ENCODE measurements at regions of chr3 and their contacts with region 1.

Region 1: DNA sequence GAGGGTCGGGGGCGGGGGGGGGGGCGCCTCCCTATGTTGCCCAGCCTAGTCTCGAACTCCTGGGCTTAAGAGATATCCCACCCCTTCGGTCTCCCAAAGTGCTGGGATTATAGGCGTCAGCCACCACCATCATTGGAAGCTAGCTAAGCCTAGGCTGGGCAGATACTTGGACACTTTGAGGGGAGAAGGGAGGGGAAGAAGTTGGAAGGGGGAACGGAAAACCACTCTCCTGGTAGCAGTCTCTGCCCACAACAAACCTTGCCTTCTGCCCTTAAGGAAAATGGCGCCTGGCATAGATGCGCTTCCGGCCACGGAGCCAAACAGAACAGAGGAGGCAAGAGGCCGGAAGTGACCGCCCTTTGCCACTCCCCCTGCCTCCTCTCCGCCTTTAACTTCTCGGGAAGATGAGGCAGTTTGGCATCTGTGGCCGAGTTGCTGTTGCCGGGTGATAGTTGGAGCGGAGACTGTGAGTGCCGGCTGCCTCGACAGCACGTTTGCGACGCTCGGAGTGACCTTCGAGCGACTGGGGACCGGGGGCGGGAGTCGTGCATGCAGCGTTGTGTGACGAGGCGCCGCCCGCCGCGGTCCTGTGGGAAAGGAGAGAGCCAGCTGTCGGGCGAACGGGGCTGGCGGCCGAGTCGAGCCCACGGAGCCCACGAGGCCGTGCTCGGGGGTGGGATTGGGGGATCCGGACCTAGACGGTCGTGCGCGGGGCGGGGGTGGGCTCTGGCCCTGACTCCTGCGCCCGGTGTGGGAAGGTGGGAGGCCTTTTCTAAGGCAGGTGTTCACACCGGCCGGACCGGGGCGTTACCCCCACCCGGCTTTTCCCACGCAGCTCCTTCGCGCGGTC is at the start of gene MFN1:
- DNase-seq: peak; percentile 80
- ATAC-seq: peak; percentile 88
- H3K4me3 Mint-ChIP-seq: peak within 1 kb of the TSS; percentile 98
- H3K27ac Mint-ChIP-seq: peak within 1 kb of the TSS; percentile 95
- H3K4me1 Mint-ChIP-seq: peaks cover 35% of the 10 kb centered on the region
- H3K27me3 Mint-ChIP-seq: no peaks in the 10 kb centered on the region
- CTCF ChIP-seq: no peak
- total RNA-seq, gene MFN1: 64.9 and 65.3 TPM in 2 replicates

Region 2: GRCh38 chr3:178392511-178392926 is 955.1 kb before region 1 on chr3:
- CTCF ChIA-PET with region 1: no interaction called
- POLR2A ChIA-PET with region 1: no interaction called
- intact Hi-C with region 1: no loop called
- DNase-seq: no peak
- ATAC-seq: no peak
- H3K4me3 Mint-ChIP-seq: no peak overlapping the region
- H3K27ac Mint-ChIP-seq: no peak overlapping the region
- H3K4me1 Mint-ChIP-seq: no peaks in the 10 kb centered on the region
- H3K27me3 Mint-ChIP-seq: no peaks in the 10 kb centered on the region
- CTCF ChIP-seq: no peak

Region 3: GRCh38 chr3:179071550-179072397 is 275.8 kb before region 1 on chr3 and contains the start of gene ZMAT3:
- CTCF ChIA-PET with region 1: no interaction called
- POLR2A ChIA-PET with region 1: interaction called, 4 read pairs
- intact Hi-C with region 1: loop called (anchors 1 kb)
- DNase-seq: peak; percentile 82
- ATAC-seq: peak; percentile 74
- H3K4me3 Mint-ChIP-seq: peak within 1 kb of the TSS; percentile 96
- H3K27ac Mint-ChIP-seq: peak within 1 kb of the TSS; percentile 91
- H3K4me1 Mint-ChIP-seq: peaks cover 60% of the 10 kb centered on the region
- H3K27me3 Mint-ChIP-seq: no peaks in the 10 kb centered on the region
- CTCF ChIP-seq: no peak
- total RNA-seq, gene ZMAT3: 29.8 and 32.0 TPM in 2 replicates

Region 4: DNA sequence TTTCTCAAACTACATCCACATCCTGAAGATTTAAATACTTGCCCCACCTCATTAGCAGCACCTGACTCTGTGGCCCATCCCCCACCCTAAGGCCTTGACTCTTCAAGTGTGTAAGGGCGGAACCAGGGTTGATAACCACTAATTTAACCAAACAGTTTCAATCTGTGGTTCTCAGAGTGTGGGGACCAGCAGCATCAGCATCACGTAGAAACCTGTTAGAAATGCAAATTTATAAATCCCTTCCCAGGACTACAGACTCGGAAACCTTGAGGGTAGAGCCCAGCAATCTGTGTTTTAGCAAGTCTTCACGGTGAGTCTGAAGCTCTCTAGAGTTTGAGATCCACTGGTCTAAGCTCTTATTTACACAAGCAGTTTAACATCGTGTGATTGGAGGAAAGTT is 91.3 kb after region 1 on chr3:
- CTCF ChIA-PET with region 1: no interaction called
- POLR2A ChIA-PET with region 1: no interaction called
- intact Hi-C with region 1: loop called (anchors 1 kb)
- DNase-seq: peak; percentile 41
- ATAC-seq: peak; percentile 96
- H3K4me3 Mint-ChIP-seq: peak overlapping the region; percentile 71
- H3K27ac Mint-ChIP-seq: peak overlapping the region; percentile 92
- H3K4me1 Mint-ChIP-seq: peaks cover 51% of the 10 kb centered on the region
- H3K27me3 Mint-ChIP-seq: no peaks in the 10 kb centered on the region
- CTCF ChIP-seq: no peak

Region 5: DNA sequence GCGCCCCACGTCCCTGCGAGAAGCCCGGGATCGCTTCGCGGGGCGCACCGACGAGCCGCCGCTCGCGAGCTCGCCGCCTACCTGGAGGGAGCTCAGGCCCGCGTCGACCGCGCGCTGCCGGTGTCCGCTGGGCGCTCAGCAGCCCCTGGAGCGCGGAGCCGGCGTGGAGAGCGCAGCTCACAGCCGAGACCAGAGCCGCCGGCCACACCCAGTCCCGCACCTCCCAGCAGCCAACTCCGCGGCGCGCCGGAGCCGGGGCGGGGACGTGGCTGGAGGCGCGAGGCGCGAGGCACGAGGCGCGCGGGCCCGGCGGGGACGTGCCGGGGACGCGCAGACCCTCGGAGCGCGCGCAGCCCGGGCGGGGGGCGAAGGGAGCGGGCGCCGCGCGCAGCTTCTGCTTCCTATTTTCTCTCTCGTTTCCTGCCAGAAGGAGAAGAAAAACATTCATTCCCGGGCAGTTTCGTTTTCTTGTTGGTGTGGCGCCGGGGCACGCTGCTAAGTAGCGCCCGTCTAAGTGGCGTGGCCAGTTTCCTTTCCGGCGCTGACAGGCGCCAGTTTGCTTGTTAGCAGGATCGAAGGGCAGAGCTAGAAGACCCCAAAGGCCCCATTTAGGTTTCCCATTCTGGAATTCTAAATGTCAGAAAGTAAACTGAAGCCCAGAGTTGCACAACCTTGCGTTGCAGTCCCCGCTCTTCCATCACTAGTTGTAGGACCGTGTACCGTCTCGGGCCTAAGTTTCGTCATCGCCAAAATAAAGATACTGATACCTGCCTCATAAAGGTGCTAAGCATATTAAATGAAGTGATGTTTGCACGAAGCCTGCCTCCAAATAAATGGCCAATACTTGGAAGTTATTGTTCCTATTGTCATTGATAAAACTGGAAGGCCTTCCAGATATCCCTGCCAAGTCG is 104.0 kb after region 1 on chr3 and contains the start of gene GNB4:
- CTCF ChIA-PET with region 1: no interaction called
- POLR2A ChIA-PET with region 1: no interaction called
- intact Hi-C with region 1: loop called (anchors 5 kb)
- DNase-seq: peak; percentile 74
- ATAC-seq: peak; percentile 88
- H3K4me3 Mint-ChIP-seq: peak within 1 kb of the TSS; percentile 92
- H3K27ac Mint-ChIP-seq: peak within 1 kb of the TSS; percentile 93
- H3K4me1 Mint-ChIP-seq: peaks cover 35% of the 10 kb centered on the region
- H3K27me3 Mint-ChIP-seq: no peaks in the 10 kb centered on the region
- CTCF ChIP-seq: no peak
- total RNA-seq, gene GNB4: 18.0 and 22.7 TPM in 2 replicates

Region 6: DNA sequence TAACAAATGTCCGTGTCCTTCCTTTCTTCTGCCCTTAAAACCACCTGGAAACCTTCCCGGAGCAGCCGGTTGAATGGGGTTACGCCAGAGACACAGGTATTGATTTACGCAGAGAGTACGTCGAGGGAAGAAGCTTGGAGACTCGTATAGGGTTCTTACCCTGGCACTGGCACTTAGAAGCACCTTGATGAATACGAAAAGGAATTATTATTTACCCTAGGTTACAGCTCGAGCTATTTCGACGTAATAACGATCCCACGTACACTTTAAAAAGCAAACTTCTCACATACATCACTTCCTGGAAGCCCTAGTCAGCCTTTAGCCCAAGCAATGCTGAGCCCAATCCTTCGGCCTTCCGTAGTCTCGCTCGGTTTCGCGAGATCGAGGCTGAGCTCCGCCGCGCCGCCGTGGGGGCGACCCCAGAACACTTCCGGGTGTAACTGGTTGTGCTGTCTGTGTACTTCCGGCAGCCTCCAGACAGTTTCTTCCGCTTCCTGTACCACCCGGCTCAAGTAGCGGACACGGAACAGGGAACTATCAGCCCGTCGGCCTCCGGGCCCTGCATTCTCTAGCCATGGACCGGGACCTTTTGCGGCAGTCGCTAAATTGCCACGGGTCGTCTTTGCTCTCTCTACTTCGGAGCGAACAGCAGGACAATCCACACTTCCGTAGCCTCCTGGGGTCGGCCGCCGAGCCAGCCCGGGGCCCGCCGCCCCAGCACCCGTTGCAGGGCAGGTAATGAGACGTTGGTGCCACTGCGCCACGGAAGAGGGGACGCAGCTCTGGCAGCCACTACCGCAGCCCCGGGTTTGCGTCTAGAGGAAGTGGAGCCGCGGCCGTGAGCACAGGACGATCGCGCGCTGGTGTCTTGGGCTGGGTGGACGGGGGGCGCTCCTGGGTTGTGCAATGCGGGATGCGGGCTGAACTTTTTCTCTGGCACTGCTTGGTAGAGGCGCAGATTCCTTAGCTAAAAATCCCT is 1254.4 kb after region 1 on chr3 and contains the start of gene TTC14:
- CTCF ChIA-PET with region 1: no interaction called
- POLR2A ChIA-PET with region 1: no interaction called
- intact Hi-C with region 1: loop called (anchors 5 kb)
- DNase-seq: peak; percentile 81
- ATAC-seq: peak; percentile 91
- H3K4me3 Mint-ChIP-seq: peak within 1 kb of the TSS; percentile 97
- H3K27ac Mint-ChIP-seq: peak within 1 kb of the TSS; percentile 95
- H3K4me1 Mint-ChIP-seq: peaks cover 22% of the 10 kb centered on the region
- H3K27me3 Mint-ChIP-seq: peaks cover 5% of the 10 kb centered on the region
- CTCF ChIP-seq: no peak
- total RNA-seq, gene TTC14: 81.5 and 82.2 TPM in 2 replicates

Region 7: GRCh38 chr3:180912304-180913296 is 1565.0 kb after region 1 on chr3 and contains the start of gene FXR1:
- CTCF ChIA-PET with region 1: no interaction called
- POLR2A ChIA-PET with region 1: no interaction called
- intact Hi-C with region 1: loop called (anchors 1 kb)
- DNase-seq: peak; percentile 90
- ATAC-seq: peak; percentile 95
- H3K4me3 Mint-ChIP-seq: peak within 1 kb of the TSS; percentile 94
- H3K27ac Mint-ChIP-seq: peak within 1 kb of the TSS; percentile 95
- H3K4me1 Mint-ChIP-seq: peaks cover 52% of the 10 kb centered on the region
- H3K27me3 Mint-ChIP-seq: no peaks in the 10 kb centered on the region
- CTCF ChIP-seq: no peak
- total RNA-seq, gene FXR1: 130 TPM in 2 replicates